ENCODE measurements at regions of chr4 and their contacts with region 1.

Region 1: GRCh38 chr4:47741200-47741599 is 96.7 kb downstream of the CORIN start:
- DNase-seq: no peak
- ATAC-seq: no peak

Region 2: GRCh38 chr4:47824840-47825239 is 83.6 kb after region 1 on chr4:
- intact Hi-C with region 1: loop called (anchors 10 kb)
- DNase-seq: peak; percentile 78
- ATAC-seq: peak; percentile 92

Region 3: GRCh38 chr4:47873877-47874541 is 132.8 kb after region 1 on chr4:
- intact Hi-C with region 1: no loop called
- DNase-seq: no peak
- ATAC-seq: no peak